Caco-2 (cell line): ENCODE measurements at regions of chr20 and their contacts with region 1.

Region 1: DNA sequence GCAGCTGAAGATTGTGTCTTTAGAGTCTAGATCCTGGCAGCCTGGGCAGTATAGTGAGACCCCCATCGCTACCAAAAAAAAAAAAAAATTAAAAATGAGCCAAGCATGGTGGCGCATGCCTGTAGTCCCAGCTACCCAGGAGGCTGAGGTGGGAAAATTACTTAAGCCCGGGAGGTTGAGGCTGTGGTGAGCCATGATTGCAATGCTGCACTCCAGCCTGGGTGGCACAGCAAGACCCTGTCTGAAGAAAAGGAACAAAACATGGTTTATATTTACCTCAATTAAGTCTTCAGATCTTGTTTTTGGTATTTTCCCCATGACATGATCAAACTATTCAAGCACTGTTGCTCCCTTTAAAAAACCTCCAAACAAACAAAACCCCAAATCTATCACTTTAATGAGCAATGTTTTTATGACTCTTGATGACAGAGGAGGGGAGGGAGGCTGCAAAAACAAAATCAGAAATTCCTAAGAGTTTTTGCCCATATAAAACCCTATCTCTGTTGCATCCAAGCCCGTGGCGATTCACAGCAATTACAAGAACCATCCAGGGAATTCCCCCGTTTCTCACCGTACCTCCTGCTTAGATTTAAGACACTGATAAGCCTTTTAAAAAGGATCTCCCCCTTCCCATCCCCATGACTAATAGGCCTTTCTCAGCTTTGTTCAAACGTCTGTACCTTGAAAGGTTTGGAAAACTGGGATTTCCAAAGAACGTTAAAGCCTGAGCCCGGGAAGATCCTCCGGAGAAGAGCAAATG is 259.9 kb downstream of the BMP7 start:
- DNase-seq: peak in 1 of 2 experiments; percentile 43
- H3K4me3 ChIP-seq: no peak overlapping the region
- H3K4me3 Mint-ChIP-seq: peak overlapping the region; percentile 28
- H3K27ac Mint-ChIP-seq: peak overlapping the region; percentile 65
- H3K4me1 ChIP-seq: peaks cover 67% of the 10 kb centered on the region
- H3K4me1 Mint-ChIP-seq: peaks cover 52% of the 10 kb centered on the region
- H3K27me3 ChIP-seq: no peaks in the 10 kb centered on the region
- H3K27me3 Mint-ChIP-seq: no peaks in the 10 kb centered on the region
- CTCF ChIP-seq: no peak

Region 2: GRCh38 chr20:56995576-56996075 is 11.0 kb before region 1 on chr20:
- CTCF ChIA-PET with region 1: interaction called, 3 read pairs
- POLR2A ChIA-PET with region 1: no interaction called
- intact Hi-C with region 1: loop called (anchors 2 kb)
- DNase-seq: peak; percentile 73 to 74
- H3K4me3 ChIP-seq: no peak overlapping the region
- H3K4me3 Mint-ChIP-seq: no peak overlapping the region
- H3K27ac Mint-ChIP-seq: no peak overlapping the region
- H3K4me1 ChIP-seq: peaks cover 11% of the 10 kb centered on the region
- H3K4me1 Mint-ChIP-seq: peaks cover 13% of the 10 kb centered on the region
- H3K27me3 ChIP-seq: no peaks in the 10 kb centered on the region
- H3K27me3 Mint-ChIP-seq: no peaks in the 10 kb centered on the region
- CTCF ChIP-seq: peak; percentile 75 to 95